Activated CD4-positive, alpha-beta memory T cell treated with anti-CD3 and anti-CD28 coated beads for 36 hours (primary cell): ENCODE measurements at regions of chr1 and their contacts with region 1.

Region 1: DNA sequence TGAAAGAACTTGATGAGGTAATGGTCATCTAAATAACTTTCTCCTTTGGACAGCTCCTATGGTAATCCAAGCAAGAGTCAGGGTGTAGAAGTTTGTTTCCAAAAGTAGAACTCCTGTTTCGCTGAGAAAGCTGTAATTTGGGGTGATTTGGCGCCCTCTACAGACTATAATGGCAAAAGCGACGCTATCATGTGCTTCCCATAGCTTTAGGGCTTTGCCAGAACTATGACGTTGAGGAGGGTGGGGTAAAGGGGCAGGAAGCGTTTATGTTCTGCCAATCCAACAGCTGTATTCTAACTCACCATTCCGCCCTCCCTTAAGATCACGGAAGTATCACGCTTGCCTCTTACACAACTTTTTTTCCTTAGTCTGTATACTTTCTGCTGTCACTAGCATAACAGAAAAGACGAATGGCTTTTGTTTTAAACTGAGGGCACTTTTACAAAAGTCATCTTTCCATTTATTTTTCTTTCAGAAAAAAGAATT is at the start of gene FMO4:
- DNase-seq: peak; percentile 88
- H3K4me3 Mint-ChIP-seq: peak within 1 kb of the TSS; percentile 70
- H3K27ac Mint-ChIP-seq: peak within 1 kb of the TSS; percentile 72
- H3K4me1 Mint-ChIP-seq: peaks cover 17% of the 10 kb centered on the region
- H3K27me3 Mint-ChIP-seq: no peaks in the 10 kb centered on the region
- total RNA-seq, gene FMO4: 1.4 to 1.9 TPM

Region 2: GRCh38 chr1:170687621-170688020 is 626.3 kb before region 1 on chr1:
- CTCF ChIA-PET with region 1: interaction called, 13 read pairs
- POLR2A ChIA-PET with region 1: no interaction called
- intact Hi-C with region 1: loop called (anchors 2 kb)
- DNase-seq: no peak
- H3K4me3 Mint-ChIP-seq: no peak overlapping the region
- H3K27ac Mint-ChIP-seq: no peak overlapping the region
- H3K4me1 Mint-ChIP-seq: no peaks in the 10 kb centered on the region
- H3K27me3 Mint-ChIP-seq: peaks cover 16% of the 10 kb centered on the region

Region 3: DNA sequence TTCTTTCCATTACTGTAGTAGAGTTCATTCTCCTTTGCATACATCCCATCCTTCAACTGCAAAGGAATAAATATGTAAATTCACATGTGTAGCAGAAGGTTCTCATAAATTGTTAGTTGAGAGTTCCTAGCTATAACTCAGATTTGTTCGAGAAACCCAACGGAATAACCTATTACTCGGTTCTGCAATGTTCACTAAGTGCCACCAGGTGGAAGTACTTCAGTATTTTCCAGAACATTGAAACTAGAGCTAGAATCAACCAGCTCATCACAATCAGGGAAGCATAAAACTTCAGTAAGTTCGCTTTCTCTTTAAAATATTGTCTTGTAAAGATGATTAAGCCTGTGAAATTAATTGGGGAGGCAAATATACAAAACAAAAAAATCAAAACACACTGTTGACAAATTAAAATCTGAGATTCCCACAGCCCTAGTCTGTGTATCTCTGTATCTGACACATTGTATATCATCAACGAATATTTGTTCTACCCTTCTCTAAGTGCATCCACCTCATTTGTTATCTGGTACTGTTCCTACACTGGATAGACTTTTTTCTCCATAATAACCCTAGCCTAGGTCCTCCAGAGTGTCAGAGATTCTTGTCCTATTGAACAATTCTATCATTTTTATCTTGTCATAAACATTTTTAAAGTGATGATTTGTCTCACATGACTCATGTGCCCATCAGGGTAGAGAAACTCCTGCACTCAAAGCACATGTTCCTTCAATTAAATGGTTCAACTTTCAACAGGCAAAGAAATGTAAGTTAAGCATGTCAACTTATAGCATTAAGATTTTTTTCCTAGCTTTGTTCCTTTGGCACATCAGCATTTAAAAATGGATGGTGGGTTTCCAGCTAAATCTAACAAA is 346.6 kb before region 1 on chr1:
- CTCF ChIA-PET with region 1: interaction called, 22 read pairs
- POLR2A ChIA-PET with region 1: no interaction called
- intact Hi-C with region 1: loop called (anchors 1 kb)
- DNase-seq: no peak
- H3K4me3 Mint-ChIP-seq: no peak overlapping the region
- H3K27ac Mint-ChIP-seq: no peak overlapping the region
- H3K4me1 Mint-ChIP-seq: no peaks in the 10 kb centered on the region
- H3K27me3 Mint-ChIP-seq: peaks cover 18% of the 10 kb centered on the region

Region 4: GRCh38 chr1:171245458-171246064 is 68.3 kb before region 1 on chr1:
- CTCF ChIA-PET with region 1: interaction called, 96 read pairs
- POLR2A ChIA-PET with region 1: no interaction called
- intact Hi-C with region 1: loop called (anchors 1 kb)
- DNase-seq: peak; percentile 14
- H3K4me3 Mint-ChIP-seq: no peak overlapping the region
- H3K27ac Mint-ChIP-seq: no peak overlapping the region
- H3K4me1 Mint-ChIP-seq: no peaks in the 10 kb centered on the region
- H3K27me3 Mint-ChIP-seq: peaks cover 16% of the 10 kb centered on the region

Region 5: DNA sequence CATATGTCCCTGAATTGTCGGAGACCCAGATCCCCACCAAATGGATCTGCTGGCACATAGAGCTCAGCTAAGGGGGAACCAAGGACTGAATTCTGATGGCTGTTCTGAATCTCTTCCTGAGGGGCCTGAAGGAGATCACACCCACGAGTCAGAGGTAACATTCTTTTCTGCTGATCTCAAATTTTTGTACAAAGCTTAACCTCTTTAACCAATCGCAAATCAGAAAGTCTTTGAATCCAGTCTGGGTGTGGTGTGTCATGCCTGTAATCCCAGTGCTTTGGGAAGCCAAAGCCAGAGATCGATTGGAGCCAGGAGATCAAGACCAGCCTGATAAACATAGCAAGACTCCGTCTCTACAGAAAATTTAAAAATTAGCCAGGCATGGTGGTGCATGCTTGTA is 108.6 kb after region 1 on chr1:
- CTCF ChIA-PET with region 1: no interaction called
- POLR2A ChIA-PET with region 1: no interaction called
- intact Hi-C with region 1: loop called (anchors 5 kb)
- DNase-seq: no peak
- H3K4me3 Mint-ChIP-seq: no peak overlapping the region
- H3K27ac Mint-ChIP-seq: no peak overlapping the region
- H3K4me1 Mint-ChIP-seq: peaks cover 31% of the 10 kb centered on the region
- H3K27me3 Mint-ChIP-seq: no peaks in the 10 kb centered on the region